GM12878 (cell line): ENCODE measurements at regions of chr3 and their contacts with region 1.

Region 1: DNA sequence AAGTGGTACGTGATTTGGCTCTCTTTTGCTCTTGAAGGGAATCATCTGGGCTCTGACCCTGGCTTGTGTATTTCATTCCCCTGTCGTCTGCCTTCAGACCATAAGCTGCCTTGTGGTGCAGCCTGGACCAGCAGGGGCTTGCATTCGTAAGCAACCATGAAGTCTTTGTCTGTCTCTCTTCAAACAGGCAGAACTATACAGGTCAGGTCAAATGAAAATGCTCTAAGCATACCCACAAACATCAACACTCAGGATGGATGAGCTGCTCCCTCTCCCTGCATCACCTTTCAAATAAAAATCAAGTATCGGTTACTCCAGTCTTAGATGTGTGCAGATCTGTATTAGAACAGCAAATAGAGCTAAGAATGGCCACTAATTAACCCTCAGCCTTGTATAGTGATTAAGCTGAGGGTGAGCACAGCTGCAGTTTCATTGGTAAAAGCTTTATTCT is 268.6 kb upstream of the UBE2E1 start:
- DNase-seq: no peak
- ATAC-seq: no peak
- H3K4me3 ChIP-seq: no peak overlapping the region
- H3K27ac ChIP-seq: no peak overlapping the region
- H3K4me1 ChIP-seq: no peaks in the 10 kb centered on the region
- H3K27me3 ChIP-seq: no peaks in the 10 kb centered on the region
- CTCF ChIP-seq: no peak
- EP300 ChIP-seq: no peak
- POLR2A ChIP-seq: no peak
- RAD21 ChIP-seq: no peak

Region 2: DNA sequence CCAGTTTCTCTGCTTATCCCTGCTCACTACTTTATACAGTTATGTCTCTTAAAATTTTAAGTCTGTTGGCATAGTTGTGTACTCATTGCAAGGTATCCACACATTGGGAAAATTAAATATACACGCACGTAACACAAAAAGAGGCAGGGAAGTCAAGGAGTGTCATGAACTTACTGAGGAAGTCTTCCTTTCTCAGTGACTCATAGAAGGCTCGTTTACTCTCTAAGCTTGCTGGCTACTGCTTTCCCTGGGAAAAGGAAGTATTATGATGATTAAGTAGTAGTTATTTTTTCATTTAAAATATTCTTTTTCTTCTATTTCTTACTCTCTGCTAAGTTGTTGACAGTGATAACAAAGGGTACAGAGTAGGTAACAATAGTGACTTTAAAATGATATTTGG is 46.7 kb before region 1 on chr3:
- CTCF ChIA-PET with region 1: no interaction called
- POLR2A ChIA-PET with region 1: no interaction called
- RAD21 ChIA-PET with region 1: no interaction called
- SMC1A ChIA-PET with region 1: no interaction called
- in situ Hi-C with region 1: no loop called
- intact Hi-C with region 1: no loop called
- DNase-seq: no peak
- ATAC-seq: no peak
- H3K4me3 ChIP-seq: no peak overlapping the region
- H3K27ac ChIP-seq: no peak overlapping the region
- H3K4me1 ChIP-seq: no peaks in the 10 kb centered on the region
- H3K27me3 ChIP-seq: no peaks in the 10 kb centered on the region
- CTCF ChIP-seq: no peak
- EP300 ChIP-seq: no peak
- POLR2A ChIP-seq: no peak
- RAD21 ChIP-seq: no peak

Region 3: DNA sequence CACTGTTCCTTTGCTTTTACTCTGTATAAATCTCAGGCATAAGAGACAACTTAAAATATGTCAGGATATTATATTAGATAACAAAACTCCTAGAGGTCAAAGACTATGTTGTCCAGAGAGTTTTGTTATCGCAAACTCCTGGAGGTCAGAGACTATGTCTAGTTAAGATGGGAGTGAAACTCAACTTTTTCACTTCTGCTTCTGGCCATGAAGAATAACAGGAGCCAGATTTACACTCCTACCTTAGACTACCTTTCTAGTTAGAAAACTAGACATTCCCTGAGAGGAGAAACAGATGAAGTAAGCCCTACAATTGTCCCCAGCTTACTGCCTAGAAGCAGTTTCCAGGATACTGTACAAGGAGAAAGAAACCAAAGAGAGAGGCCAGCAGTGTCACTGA is 13.3 kb after region 1 on chr3:
- CTCF ChIA-PET with region 1: interaction called, 5 read pairs
- POLR2A ChIA-PET with region 1: no interaction called
- RAD21 ChIA-PET with region 1: no interaction called
- SMC1A ChIA-PET with region 1: interaction called, 11 read pairs
- in situ Hi-C with region 1: no loop called
- intact Hi-C with region 1: no loop called
- DNase-seq: peak; percentile 39
- ATAC-seq: peak; percentile 90
- H3K4me3 ChIP-seq: no peak overlapping the region
- H3K27ac ChIP-seq: no peak overlapping the region
- H3K4me1 ChIP-seq: peaks cover 11% of the 10 kb centered on the region
- H3K27me3 ChIP-seq: no peaks in the 10 kb centered on the region
- CTCF ChIP-seq: no peak
- EP300 ChIP-seq: peak in 1 of 2 experiments; percentile 62; a peak in 1 of 4 replicates
- POLR2A ChIP-seq: no peak
- RAD21 ChIP-seq: no peak